ENCODE measurements at regions of chr7 and their contacts with region 1.

Region 1: DNA sequence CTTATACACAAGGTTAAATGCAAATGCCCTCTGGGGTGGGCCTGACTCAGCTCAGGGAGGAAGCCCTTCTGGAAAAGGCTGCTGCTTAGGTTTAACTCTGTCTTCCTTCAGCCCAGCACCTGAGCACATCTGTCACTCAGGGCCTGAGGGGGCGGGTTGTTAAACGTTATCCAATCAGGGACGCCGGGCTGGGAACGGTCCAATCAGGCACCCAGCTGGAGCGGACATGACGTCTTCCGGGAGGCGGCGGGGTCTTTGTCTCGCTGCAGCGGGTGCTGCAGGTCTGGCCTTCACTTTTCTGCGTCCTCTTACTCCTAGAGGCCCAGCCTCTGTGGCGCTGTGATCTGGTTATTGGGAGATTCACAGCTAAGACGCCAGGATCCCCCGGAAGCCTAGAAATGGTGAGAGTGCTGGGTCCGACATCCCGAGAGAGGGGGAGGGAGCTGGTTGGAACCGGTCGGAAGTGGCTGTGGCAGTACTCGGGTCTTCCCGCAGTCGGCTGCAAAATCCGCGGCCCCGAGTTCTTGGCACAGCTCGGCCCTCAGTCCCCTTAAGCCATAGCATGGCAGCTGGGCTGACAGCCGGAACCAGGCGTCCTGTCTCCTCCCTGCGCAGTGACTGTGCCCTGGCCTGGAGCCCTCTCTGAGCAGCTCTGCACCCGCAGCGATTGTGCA is at the start of gene ZNF138:
- DNase-seq: peak; percentile 83
- ATAC-seq: peak; percentile 99
- H3K4me3 Mint-ChIP-seq: peak within 1 kb of the TSS; percentile 99
- H3K27ac Mint-ChIP-seq: peak within 1 kb of the TSS; percentile 98
- H3K4me1 Mint-ChIP-seq: peaks cover 27% of the 10 kb centered on the region
- H3K27me3 Mint-ChIP-seq: no peaks in the 10 kb centered on the region
- CTCF ChIP-seq: no peak
- total RNA-seq, gene ZNF138: 14.2 and 17.8 TPM in 2 replicates

Region 2: GRCh38 chr7:64686493-64687184 is 107.7 kb before region 1 on chr7:
- CTCF ChIA-PET with region 1: no interaction called
- POLR2A ChIA-PET with region 1: interaction called, 12 read pairs
- intact Hi-C with region 1: no loop called
- DNase-seq: peak; percentile 29
- ATAC-seq: peak; percentile 84
- H3K4me3 Mint-ChIP-seq: peak overlapping the region; percentile 79
- H3K27ac Mint-ChIP-seq: peak overlapping the region; percentile 99
- H3K4me1 Mint-ChIP-seq: peaks cover 70% of the 10 kb centered on the region
- H3K27me3 Mint-ChIP-seq: no peaks in the 10 kb centered on the region
- CTCF ChIP-seq: no peak

Region 3: GRCh38 chr7:64811767-64812166 is 17.5 kb after region 1 on chr7:
- CTCF ChIA-PET with region 1: no interaction called
- POLR2A ChIA-PET with region 1: interaction called, 3 read pairs
- intact Hi-C with region 1: loop called (anchors 2 kb)
- DNase-seq: no peak
- ATAC-seq: no peak
- H3K4me3 Mint-ChIP-seq: no peak overlapping the region
- H3K27ac Mint-ChIP-seq: no peak overlapping the region
- H3K4me1 Mint-ChIP-seq: peaks cover 10% of the 10 kb centered on the region
- H3K27me3 Mint-ChIP-seq: no peaks in the 10 kb centered on the region
- CTCF ChIP-seq: no peak

Measured in activated B cell treated with CpG ODN at 0.5 μM for 24 hours (primary cell).